ENCODE measurements at regions of chr10 and their contacts with region 1.

Region 1: GRCh38 chr10:119596537-119597404 is at the start of gene TIAL1:
- DNase-seq: peak; percentile 95 to 99
- ATAC-seq: peak; percentile 94 to 97 (median 95)
- H3K4me3 ChIP-seq: peak within 1 kb of the TSS; percentile 72 to 94 (median 86)
- H3K27ac ChIP-seq: peak within 1 kb of the TSS; percentile 92 to 99 (median 98)
- H3K4me1 ChIP-seq: peaks cover 3 to 48% (median 46%) of the 10 kb centered on the region in 9 donors
- H3K27me3 ChIP-seq: no peaks in the 10 kb centered on the region
- CTCF ChIP-seq: peak in 1 of 9 donors; percentile 5
- total RNA-seq, gene TIAL1: 65.3 to 94.6 (median 70.7) TPM

Region 2: GRCh38 chr10:119178372-119179119 is 418.2 kb before region 1 on chr10 and contains the start of gene PRDX3:
- intact Hi-C with region 1: loop called in 1 of 10 experiments (anchors 10 kb)
- DNase-seq: peak; percentile 93 to 95
- ATAC-seq: peak; percentile 99 to 100 (median 99)
- H3K4me3 ChIP-seq: peak within 1 kb of the TSS; percentile 59 to 90 (median 76)
- H3K27ac ChIP-seq: peak within 1 kb of the TSS; percentile 80 to 96 (median 90)
- H3K4me1 ChIP-seq: peaks cover 0 to 29% (median 20%) of the 10 kb centered on the region in 9 donors
- H3K27me3 ChIP-seq: no peaks in the 10 kb centered on the region
- CTCF ChIP-seq: peak in 7 of 9 donors; percentile 21 to 54 (median 29)
- total RNA-seq, gene PRDX3: 217 to 323 (median 286) TPM

Region 3: DNA sequence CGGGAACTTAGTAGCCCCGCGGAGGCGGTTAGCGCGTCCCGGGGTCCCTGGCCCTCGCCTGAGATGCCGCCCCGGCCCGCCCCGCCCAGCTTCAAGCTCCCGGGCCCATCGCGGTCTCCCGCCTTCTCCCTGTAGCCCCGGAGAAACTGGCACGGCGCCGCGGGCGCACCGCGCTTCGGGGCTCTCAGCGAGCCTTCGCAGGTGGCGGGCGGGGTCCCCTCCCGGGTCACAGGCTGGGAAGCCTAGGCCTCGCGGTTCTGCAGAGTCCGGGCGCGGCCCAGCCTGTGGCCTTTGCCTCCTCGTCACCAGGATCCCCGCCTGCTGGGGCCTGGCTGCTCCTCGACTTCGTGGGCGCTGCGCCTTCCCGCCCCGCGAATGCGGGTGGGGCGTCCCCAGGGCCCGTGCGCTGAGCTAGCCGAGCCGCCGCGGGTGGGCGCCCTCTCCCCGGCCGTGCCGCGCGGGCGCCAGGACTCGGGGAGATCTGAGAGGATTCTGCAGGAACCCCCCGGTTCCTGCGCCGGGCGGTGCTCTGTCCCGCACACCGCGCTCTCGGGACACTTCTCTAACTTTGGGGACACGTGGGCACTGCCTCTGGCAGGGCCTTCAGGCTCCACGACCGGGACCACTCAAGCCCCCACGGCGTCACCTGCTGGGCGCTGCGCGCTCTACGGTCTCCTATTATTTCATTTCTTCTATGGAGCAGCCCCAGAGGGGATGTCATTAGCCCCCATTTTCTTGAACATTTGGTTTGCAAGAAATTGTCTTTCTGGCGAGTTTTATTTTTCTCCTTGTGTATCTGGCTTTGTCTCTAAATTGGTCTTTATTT is 53.6 kb before region 1 on chr10:
- intact Hi-C with region 1: no loop called
- DNase-seq: peak; percentile 54 to 58
- ATAC-seq: peak; percentile 60 to 79 (median 70)
- H3K4me3 ChIP-seq: peak overlapping the region; percentile 42 to 85 (median 65)
- H3K27ac ChIP-seq: peak overlapping the region in 8 of 10 donors; percentile 40 to 89 (median 66)
- H3K4me1 ChIP-seq: peaks cover 0 to 43% (median 16%) of the 10 kb centered on the region in 9 donors
- H3K27me3 ChIP-seq: peaks cover 0 to 51% (median 48%) of the 10 kb centered on the region in 7 donors
- CTCF ChIP-seq: peak in 8 of 9 donors; percentile 17 to 66 (median 54)

Region 4: GRCh38 chr10:119567978-119568377 is 28.8 kb before region 1 on chr10:
- intact Hi-C with region 1: loop called in 1 of 10 experiments (anchors 2 kb)
- DNase-seq: no peak
- ATAC-seq: no peak
- H3K4me3 ChIP-seq: no peak overlapping the region
- H3K27ac ChIP-seq: no peak overlapping the region
- H3K4me1 ChIP-seq: peaks cover 0 to 7% (median 0%) of the 10 kb centered on the region in 9 donors
- H3K27me3 ChIP-seq: no peaks in the 10 kb centered on the region
- CTCF ChIP-seq: no peak

Region 5: DNA sequence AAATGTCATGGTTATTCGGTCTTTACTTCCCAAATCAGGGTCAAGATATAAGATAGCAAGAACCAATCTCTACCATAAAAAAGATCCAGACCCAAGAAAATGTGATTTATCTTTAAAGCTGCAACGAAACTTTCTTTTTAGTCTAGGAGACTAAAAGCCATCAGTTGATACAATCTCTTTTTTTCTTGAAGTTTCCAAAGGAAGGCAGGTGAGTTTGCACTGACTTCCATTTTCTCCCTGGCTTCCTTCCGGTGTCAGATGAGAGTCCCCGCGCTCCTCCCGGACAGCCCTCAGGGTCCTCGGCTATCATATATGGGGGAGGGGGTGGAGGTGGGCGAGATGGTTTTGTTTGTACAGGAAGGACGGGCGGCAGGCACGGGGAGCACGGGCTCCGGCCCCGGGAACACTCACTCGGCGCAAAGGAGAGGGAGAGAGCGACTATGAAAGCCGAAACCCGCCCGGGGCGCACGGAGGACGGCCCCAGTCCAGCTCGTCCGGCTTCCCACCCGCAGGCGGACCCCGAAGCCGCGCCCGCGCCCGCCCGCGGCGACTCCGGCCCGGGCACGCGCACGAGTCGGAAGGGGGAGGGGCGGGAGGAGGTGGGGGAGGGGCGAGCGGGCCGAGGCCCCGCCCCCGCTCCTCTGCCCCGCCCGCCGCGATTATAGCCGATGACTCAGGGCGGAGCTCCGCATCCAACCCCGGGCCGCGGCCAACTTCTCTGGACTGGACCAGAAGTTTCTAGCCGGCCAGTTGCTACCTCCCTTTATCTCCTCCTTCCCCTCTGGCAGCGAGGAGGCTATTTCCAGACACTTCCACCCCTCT is 54.1 kb after region 1 on chr10 and contains the start of gene BAG3:
- intact Hi-C with region 1: loop called in 6 of 10 experiments (anchors 1 to 10 kb)
- DNase-seq: peak; percentile 94 to 95
- ATAC-seq: peak; percentile 89 to 95 (median 92)
- H3K4me3 ChIP-seq: peak within 1 kb of the TSS; percentile 59 to 96 (median 86)
- H3K27ac ChIP-seq: peak within 1 kb of the TSS; percentile 92 to 100 (median 98)
- H3K4me1 ChIP-seq: peaks cover 20 to 41% (median 34%) of the 10 kb centered on the region in 9 donors
- H3K27me3 ChIP-seq: peaks cover 0 to 3% (median 0%) of the 10 kb centered on the region in 7 donors
- CTCF ChIP-seq: no peak
- total RNA-seq, gene BAG3: 115 to 191 (median 145) TPM

Region 6: DNA sequence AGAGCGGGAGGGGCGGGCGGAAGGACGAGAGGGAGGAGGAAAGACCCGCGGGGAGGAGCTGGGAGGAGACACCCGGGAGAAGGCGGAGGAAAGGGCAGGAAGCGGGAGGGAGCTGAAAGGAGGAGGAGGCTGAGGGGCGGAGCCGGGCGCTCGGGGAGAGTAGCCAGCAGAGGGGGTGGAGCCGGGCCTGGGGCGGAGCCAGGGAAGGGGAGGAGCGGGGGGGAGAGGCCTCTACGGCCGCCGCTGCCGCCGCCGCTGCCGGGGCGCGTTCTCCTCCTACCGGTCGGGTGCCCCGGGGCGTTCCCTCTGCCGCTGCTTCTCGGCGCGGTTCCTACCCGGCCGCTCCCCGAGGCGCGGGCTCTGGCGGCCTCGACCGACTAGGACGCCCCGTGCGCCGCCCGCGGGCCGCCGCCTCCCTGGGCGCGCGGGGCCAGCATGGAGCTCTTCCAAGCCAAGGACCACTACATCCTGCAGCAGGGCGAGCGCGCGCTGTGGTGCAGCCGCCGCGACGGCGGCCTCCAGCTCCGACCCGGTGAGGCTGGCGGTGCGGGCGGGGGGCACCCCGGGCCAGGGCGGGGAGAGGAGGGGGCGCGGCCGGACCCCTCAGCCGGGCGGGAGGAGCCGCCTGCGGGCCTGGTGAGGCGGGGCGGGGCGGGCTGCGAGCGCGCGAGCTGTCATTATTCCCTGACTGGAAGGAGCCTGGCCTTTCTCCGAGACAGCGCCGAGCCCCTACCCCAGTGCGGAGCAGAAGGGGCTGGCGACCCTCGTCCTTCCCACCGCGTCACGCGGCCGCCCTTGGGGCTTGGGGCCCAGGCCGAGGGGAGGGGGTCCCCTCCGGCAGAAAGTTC is 129.3 kb after region 1 on chr10 and contains the start of gene INPP5F:
- intact Hi-C with region 1: loop called in 1 of 10 experiments (anchors 5 kb)
- DNase-seq: peak; percentile 99 to 100
- ATAC-seq: peak; percentile 98 to 100 (median 99)
- H3K4me3 ChIP-seq: peak within 1 kb of the TSS; percentile 44 to 95 (median 82)
- H3K27ac ChIP-seq: peak within 1 kb of the TSS; percentile 66 to 98 (median 96)
- H3K4me1 ChIP-seq: peaks cover 3 to 37% (median 28%) of the 10 kb centered on the region in 9 donors
- H3K27me3 ChIP-seq: no peaks in the 10 kb centered on the region
- CTCF ChIP-seq: peak in 8 of 9 donors; percentile 25 to 65 (median 41)
- total RNA-seq, gene INPP5F: 4.2 to 13.3 (median 7.5) TPM

Region 7: GRCh38 chr10:119872860-119873681 is 276.3 kb after region 1 on chr10:
- intact Hi-C with region 1: loop called in 3 of 10 experiments (anchors 5 to 10 kb)
- DNase-seq: peak; percentile 90 to 93
- ATAC-seq: peak; percentile 98 to 99 (median 98)
- H3K4me3 ChIP-seq: peak overlapping the region; percentile 54 to 92 (median 79)
- H3K27ac ChIP-seq: peak overlapping the region; percentile 78 to 98 (median 92)
- H3K4me1 ChIP-seq: peaks cover 0 to 43% (median 25%) of the 10 kb centered on the region in 9 donors
- H3K27me3 ChIP-seq: no peaks in the 10 kb centered on the region
- CTCF ChIP-seq: peak in 1 of 9 donors; percentile 12

Region 8: DNA sequence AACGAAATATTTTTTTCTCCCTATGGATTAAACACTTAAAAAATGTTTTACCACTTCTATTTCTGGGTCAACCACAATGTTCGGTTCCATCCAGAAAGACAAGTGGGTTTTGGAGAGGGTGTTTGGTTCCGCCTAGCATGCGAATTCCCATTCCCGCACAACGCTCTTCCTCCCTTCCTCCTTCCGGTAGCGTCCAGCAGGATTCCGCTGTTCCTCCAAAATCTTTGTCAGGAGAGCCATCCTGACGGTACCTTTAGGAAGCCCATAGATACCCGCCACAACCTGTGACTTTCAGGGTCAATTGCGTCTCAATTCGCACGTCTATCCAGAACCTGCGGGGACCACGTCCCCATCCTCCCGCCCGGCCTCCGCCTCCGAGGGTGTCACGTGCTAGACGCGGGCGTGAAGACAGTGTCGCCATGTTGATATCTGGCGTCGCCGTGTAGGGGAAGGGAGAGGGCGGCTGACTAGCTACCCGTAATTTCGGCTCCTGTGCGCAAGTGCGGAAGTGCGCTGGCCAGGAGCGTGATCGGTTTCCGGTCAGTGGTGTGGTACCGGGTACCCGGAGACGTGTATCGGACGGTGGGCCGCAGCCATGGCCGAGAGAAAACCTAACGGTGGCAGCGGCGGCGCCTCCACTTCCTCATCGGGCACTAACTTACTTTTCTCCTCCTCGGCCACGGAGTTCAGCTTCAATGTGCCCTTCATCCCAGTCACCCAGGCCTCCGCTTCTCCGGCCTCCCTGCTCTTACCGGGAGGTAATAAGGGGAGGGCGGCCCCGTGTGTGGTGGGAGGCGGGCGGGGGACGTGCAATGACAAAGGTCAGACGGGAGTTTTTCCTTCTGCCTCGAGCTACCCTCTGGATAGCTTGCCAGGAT is 295.7 kb after region 1 on chr10 and contains the start of gene SEC23IP:
- intact Hi-C with region 1: loop called in 1 of 10 experiments (anchors 10 kb)
- DNase-seq: peak; percentile 96 to 97
- ATAC-seq: peak; percentile 99 to 100 (median 99)
- H3K4me3 ChIP-seq: peak within 1 kb of the TSS; percentile 69 to 98 (median 86)
- H3K27ac ChIP-seq: peak within 1 kb of the TSS; percentile 41 to 93 (median 87)
- H3K4me1 ChIP-seq: peaks cover 4 to 59% (median 42%) of the 10 kb centered on the region in 9 donors
- H3K27me3 ChIP-seq: no peaks in the 10 kb centered on the region
- CTCF ChIP-seq: peak in 2 of 9 donors; percentile 2 to 15
- total RNA-seq, gene SEC23IP: 24.0 to 43.9 (median 31.2) TPM

Measured in heart right ventricle (tissue), 16 donors.